HAP-1 (cell line): ENCODE measurements at regions of chr1 and their contacts with region 1.

Region 1: GRCh38 chr1:44029906-44030604 is 1.2 kb downstream of the SLC6A9 start:
- DNase-seq: peak; percentile 90 to 96
- H3K4me3 ChIP-seq: peak overlapping the region; percentile 94
- H3K4me1 ChIP-seq: peaks cover 10% of the 10 kb centered on the region
- H3K27me3 ChIP-seq: no peaks in the 10 kb centered on the region

Region 2: DNA sequence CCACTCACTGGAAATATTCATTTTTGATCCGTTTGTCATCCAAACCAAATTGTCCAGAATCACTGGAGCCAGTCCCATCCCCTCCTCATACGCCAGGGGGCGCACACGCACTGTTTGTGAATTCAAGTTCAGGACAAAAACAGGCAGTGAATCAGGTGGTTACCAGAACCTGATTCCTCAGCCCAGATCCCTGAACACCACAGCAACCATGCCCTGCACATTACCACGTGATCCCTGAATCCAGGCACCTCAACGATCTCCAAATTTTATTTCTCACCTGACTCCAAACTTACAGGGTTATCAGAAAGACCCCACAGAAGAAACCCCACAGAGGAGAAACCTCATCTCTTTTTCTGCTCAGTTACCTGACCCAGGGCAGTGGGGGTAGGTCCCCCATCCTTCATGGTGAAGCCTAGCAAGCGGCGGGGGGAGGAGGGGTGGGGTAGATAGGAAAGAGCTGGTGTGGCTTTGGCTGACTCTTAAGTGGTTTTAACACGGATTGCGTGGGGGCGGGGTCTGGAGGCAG is 500.8 kb before region 1 on chr1:
- in situ Hi-C with region 1: loop called (anchors 10 kb)
- DNase-seq: peak; percentile 82 to 90
- H3K4me3 ChIP-seq: no peak overlapping the region
- H3K4me1 ChIP-seq: peaks cover 7% of the 10 kb centered on the region
- H3K27me3 ChIP-seq: no peaks in the 10 kb centered on the region

Region 3: GRCh38 chr1:43763497-43763973 is 266.5 kb before region 1 on chr1:
- in situ Hi-C with region 1: loop called (anchors 25 kb)
- DNase-seq: peak; percentile 83 to 92
- H3K4me3 ChIP-seq: no peak overlapping the region
- H3K4me1 ChIP-seq: peaks cover 38% of the 10 kb centered on the region
- H3K27me3 ChIP-seq: no peaks in the 10 kb centered on the region

Region 4: GRCh38 chr1:44500181-44501046 is 470.4 kb after region 1 on chr1:
- in situ Hi-C with region 1: no loop called
- DNase-seq: peak; percentile 87 to 91
- H3K4me3 ChIP-seq: peak overlapping the region; percentile 15
- H3K4me1 ChIP-seq: peaks cover 31% of the 10 kb centered on the region
- H3K27me3 ChIP-seq: no peaks in the 10 kb centered on the region